ENCODE measurements at regions of chr5 and their contacts with region 1.

Region 1: DNA sequence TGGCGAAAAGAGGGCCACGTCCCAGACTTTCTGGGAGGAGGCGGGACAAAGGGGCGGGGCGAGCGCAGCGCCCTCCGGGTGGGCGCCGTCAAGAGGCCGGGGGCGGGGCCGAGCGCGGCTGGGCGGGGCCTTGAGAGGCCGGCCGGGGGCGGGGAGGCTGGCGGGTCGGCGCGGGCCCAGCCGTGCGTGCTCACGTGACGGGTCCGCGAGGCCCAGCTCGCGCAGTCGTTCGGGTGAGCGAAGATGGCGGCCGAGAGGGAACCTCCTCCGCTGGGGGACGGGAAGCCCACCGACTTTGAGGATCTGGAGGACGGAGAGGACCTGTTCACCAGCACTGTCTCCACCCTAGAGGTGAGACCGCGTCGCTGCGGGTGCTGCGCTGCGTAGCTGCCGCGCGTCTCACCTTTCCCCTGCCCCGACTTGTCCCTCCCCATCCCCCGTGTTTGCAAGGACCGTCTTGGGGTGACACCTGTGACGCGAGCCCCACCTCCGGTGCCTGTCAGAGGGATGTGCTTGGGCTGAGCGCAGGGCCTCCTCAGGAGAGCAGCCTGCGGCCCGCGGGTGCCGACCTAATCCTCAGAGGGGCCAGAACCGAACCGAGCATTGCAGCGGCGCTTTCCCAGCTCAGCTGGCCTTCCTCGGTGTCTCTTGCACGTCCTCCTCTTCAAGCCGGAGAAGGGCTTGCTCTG is at the start of gene SNX2:
- DNase-seq: peak; percentile 84 to 91
- ATAC-seq: peak; percentile 93 to 94
- H3K4me3 ChIP-seq: peak within 1 kb of the TSS; percentile 84 to 98 (median 89)
- H3K27ac ChIP-seq: peak within 1 kb of the TSS; percentile 83 to 95 (median 90)
- H3K4me1 ChIP-seq: peaks cover 21 to 30% of the 10 kb centered on the region in 2 donors
- H3K27me3 ChIP-seq: no peaks in the 10 kb centered on the region
- CTCF ChIP-seq: peak in 2 of 5 experiments; percentile 23 to 34
- POLR2A ChIP-seq: peak; percentile 80 to 84
- total RNA-seq, gene SNX2: 28.8 to 35.1 (median 32.0) TPM

Region 2: GRCh38 chr5:121962347-121962670 is 812.7 kb before region 1 on chr5:
- in situ Hi-C with region 1: no loop called
- intact Hi-C with region 1: loop called (anchors 2 kb)
- DNase-seq: no peak
- ATAC-seq: peak; percentile 6 to 9
- H3K4me3 ChIP-seq: peak overlapping the region; percentile 74 to 92 (median 87)
- H3K27ac ChIP-seq: peak overlapping the region; percentile 83 to 86 (median 85)
- H3K4me1 ChIP-seq: peaks cover 12 to 16% of the 10 kb centered on the region in 2 donors
- H3K27me3 ChIP-seq: peaks cover 0 to 10% (median 4%) of the 10 kb centered on the region in 3 donors
- CTCF ChIP-seq: no peak
- POLR2A ChIP-seq: no peak

Region 3: GRCh38 chr5:122532035-122532434 is 243.0 kb before region 1 on chr5:
- in situ Hi-C with region 1: no loop called
- intact Hi-C with region 1: no loop called
- DNase-seq: no peak
- ATAC-seq: no peak
- H3K4me3 ChIP-seq: no peak overlapping the region
- H3K27ac ChIP-seq: no peak overlapping the region
- H3K4me1 ChIP-seq: no peaks in the 10 kb centered on the region
- H3K27me3 ChIP-seq: no peaks in the 10 kb centered on the region
- CTCF ChIP-seq: no peak
- POLR2A ChIP-seq: no peak

Region 4: DNA sequence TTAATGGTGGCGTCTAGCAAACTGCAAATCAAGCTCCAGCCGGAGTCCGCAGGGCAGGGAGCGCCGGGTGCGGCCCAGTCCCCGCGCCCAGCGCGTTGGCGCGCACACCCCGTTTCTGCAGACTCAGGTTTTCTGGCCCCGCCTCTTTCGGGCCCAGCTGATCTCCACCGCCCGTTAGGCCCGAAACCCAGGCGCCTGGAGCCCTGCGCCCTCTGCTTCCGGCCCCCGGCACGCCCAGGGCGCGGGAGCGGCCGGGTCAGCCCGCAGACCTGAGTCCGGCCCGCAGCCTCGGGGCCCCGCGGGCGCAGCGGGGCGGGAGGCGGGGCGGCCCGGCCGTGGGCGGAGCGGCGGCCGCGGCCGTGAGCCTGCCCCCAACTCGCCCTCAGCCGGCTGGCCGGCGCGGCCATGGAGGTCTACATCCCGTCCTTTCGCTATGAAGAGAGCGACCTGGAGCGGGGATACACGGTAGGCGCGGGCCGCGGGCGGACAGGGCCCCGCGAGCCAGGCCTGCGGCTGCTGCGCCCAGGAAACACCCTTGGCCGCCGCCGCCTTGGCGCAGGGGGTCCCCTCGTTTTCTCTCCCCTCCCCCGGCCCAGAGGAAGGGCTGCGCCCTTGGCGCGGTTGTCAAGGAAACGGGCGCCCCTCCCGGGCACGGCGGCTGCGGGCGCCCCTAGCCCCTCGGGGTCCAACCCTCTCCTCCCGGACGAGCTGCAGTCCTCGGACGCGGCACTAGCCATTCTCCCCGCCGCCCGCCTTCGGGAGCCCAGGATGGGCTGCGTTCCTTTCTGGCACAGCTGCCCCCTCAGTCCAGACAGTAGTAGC is 70.4 kb after region 1 on chr5 and contains the start of gene SNX24:
- in situ Hi-C with region 1: loop called in 1 of 4 experiments (anchors 10 kb)
- intact Hi-C with region 1: loop called (anchors 2 kb)
- DNase-seq: peak; percentile 60 to 81
- ATAC-seq: peak; percentile 88 to 90
- H3K4me3 ChIP-seq: peak within 1 kb of the TSS; percentile 88 to 96 (median 92)
- H3K27ac ChIP-seq: peak within 1 kb of the TSS; percentile 76 to 91 (median 86)
- H3K4me1 ChIP-seq: peaks cover 11 to 13% of the 10 kb centered on the region in 2 donors
- H3K27me3 ChIP-seq: no peaks in the 10 kb centered on the region
- CTCF ChIP-seq: no peak
- POLR2A ChIP-seq: peak; percentile 38 to 53
- total RNA-seq, gene SNX24: 6.9 to 17.8 (median 10.6) TPM

Region 5: DNA sequence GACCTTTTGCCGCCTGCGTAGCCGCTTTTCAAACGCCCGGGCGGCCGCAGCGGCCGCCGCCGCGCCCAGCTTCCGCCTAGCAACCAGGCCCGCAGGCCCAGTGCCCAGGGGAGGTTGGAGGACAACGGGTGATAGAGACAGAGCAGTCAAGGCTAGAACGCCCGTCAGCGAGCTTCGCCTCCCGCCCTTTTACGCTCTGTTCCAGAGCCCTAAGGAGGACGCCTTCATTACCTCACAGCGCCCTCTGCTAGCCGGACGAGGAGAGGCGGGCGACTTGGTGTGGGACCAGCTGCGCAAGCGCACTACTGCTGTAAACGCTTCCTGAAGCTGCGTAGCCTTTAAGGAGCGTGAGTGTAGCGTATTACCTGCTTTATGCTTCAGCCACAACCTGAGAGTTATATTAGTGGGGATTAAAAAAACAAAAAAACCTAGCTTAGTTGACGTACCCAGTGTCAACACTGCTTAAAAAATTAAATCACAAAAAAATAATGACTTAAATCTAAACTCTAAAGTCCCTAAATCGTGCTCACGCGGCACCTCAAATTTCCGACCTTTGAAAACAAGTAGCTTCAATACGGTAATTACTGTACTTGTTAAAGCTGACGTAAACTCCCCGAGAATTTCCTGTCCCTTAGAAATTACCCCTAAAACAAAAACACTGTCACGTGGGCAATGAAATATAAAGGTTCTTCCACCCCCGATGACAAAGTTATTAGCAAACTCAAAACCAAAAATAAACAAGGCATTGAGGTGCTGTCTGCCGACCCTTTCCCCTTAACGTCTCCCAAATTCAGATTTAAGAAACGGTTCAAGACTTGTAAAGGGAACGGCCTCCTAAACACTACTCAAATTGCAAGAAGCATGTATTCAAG is 648.5 kb after region 1 on chr5 and contains the start of gene CEP120:
- in situ Hi-C with region 1: no loop called
- intact Hi-C with region 1: loop called (anchors 5 kb)
- DNase-seq: peak; percentile 97 to 99
- ATAC-seq: peak; percentile 98 to 99
- H3K4me3 ChIP-seq: peak within 1 kb of the TSS; percentile 81 to 98 (median 89)
- H3K27ac ChIP-seq: peak within 1 kb of the TSS; percentile 86 to 91 (median 87)
- H3K4me1 ChIP-seq: peaks cover 9 to 11% of the 10 kb centered on the region in 2 donors
- H3K27me3 ChIP-seq: no peaks in the 10 kb centered on the region
- CTCF ChIP-seq: peak in 4 of 5 experiments; percentile 52 to 78 (median 70)
- POLR2A ChIP-seq: peak; percentile 48 to 67
- total RNA-seq, gene CEP120: 3.9 to 7.8 (median 7.6) TPM

Measured in gastrocnemius medialis (tissue), 4 donors.